ENCODE measurements at regions of chr17 and their contacts with region 1.

Region 1: DNA sequence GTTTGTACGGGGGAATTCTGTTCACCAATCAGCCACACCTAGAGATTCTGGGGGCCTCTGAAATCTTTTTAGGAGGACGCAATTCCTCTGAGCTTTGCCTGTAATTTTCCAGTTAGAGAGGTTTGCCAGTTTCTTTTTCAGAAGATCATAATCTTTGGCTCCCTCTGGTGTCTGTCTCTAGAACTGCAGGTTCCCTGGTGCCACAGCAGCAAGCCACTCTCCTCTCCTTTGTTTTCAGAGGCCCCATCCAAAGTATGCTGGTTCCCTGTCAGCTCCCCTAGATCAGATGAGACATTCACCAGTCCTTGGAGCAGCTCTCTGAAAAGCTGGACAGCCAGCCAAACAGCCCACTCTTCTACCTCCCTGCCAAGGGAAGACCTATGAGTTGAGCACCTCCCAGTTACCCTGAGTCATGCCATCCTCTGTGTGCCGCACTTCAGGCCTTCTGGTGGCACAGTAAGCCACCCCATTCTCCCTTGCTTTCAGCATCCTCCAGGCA is 36.1 kb downstream of the RNF112 start:
- DNase-seq: peak; percentile 15 to 96 (median 79)

Region 2: DNA sequence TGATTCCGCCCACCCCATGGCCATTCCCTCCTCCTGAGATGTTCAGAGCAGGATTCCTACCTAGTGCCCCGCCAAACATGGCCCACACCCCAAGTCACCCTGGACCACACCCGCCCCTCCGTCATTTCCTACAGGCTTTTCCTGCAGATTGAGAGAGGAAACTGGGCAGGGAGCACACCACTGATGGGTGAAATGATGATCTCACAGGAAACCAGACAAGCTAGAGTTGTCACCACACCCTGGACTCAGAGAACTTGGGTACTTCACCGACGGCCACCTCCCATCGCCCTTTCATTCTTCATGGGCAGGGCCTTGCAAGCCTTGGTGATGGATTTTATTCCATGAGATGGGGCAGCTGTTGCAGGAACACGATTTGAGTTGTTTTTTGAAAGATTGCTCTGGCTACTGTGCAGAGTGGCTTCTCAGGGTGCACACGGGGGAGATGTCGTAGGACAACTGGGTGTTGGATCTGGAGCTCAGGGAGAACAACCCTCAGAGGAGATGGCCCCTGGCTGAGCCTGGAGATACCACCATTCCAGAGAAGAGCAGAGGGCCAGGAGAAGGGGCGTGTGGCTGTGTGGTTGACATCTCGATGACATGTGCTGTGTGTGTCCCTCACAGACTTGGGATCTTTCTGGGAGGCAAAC is 77.2 kb before region 1 on chr17:
- intact Hi-C with region 1: loop called (anchors 5 kb)
- DNase-seq: peak in 3 of 42 donors; percentile 3 to 26 (median 7)

Measured in head of caudate nucleus (tissue), 42 donors.